Psoas muscle (tissue), 8 donors: ENCODE measurements at regions of chr7 and their contacts with region 1.

Region 1: GRCh38 chr7:158782761-158783401 is 46.4 kb downstream of the ESYT2 start:
- DNase-seq: peak; percentile 57 to 83
- ATAC-seq: peak; percentile 85 to 94 (median 88)
- H3K4me3 ChIP-seq: peak overlapping the region; percentile 24
- H3K27ac ChIP-seq: peak overlapping the region; percentile 71
- H3K4me1 ChIP-seq: peaks cover 25% of the 10 kb centered on the region
- H3K27me3 ChIP-seq: no peaks in the 10 kb centered on the region
- CTCF ChIP-seq: peak; percentile 56

Region 2: DNA sequence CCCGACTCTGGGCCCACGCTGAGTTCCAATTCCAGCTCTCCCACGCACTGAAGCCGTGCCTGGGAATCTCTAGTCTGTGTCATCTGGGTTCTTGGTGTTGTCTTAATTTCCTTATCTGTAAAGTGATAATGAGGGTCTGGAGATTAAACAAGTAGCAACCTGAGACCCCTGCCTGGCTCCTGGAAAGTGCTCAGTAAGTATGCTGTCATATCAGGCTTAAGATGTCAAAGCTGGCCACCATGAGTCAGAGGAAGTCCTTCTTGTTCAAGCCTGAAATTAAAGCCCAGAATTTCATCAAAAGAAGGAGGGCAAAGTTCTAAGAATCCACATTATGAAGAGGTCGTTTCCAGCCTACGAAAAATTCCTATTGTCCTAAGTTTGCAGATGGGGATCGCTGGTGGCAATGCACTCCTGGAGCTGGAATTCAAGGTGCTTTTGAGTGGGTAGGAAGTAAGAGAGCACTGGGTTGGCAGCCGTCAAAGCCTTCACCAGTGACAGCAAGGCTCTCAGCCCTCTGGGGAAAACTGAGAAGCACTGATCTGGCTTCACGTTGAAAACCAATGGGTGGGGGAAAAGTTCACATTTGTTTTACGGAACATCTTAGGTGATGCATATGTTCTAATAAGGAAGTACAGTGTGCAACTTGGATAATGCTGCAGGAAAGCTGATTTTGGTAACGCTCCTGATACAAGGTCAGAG is 28.0 kb before region 1 on chr7:
- intact Hi-C with region 1: no loop called
- DNase-seq: no peak
- ATAC-seq: no peak
- H3K4me3 ChIP-seq: no peak overlapping the region
- H3K27ac ChIP-seq: no peak overlapping the region
- H3K4me1 ChIP-seq: no peaks in the 10 kb centered on the region
- H3K27me3 ChIP-seq: no peaks in the 10 kb centered on the region
- CTCF ChIP-seq: no peak

Region 3: GRCh38 chr7:158818325-158819213 is 35.7 kb after region 1 on chr7:
- intact Hi-C with region 1: loop called in 1 of 2 experiments (anchors 5 kb)
- DNase-seq: peak; percentile 92 to 96
- ATAC-seq: peak; percentile 94 to 97 (median 96)
- H3K4me3 ChIP-seq: peak overlapping the region; percentile 52
- H3K27ac ChIP-seq: peak overlapping the region; percentile 95
- H3K4me1 ChIP-seq: peaks cover 70% of the 10 kb centered on the region
- H3K27me3 ChIP-seq: no peaks in the 10 kb centered on the region
- CTCF ChIP-seq: no peak

Region 4: GRCh38 chr7:158829342-158830210 is 46.7 kb after region 1 on chr7 and contains the start of gene ESYT2:
- intact Hi-C with region 1: loop called in 1 of 2 experiments (anchors 2 kb)
- DNase-seq: peak; percentile 99 to 100
- ATAC-seq: peak; percentile 92 to 96 (median 94)
- H3K4me3 ChIP-seq: peak within 1 kb of the TSS; percentile 85
- H3K27ac ChIP-seq: peak within 1 kb of the TSS; percentile 99
- H3K4me1 ChIP-seq: peaks cover 16% of the 10 kb centered on the region
- H3K27me3 ChIP-seq: no peaks in the 10 kb centered on the region
- CTCF ChIP-seq: peak; percentile 8
- total RNA-seq, gene ESYT2: 35.9 to 63.4 (median 54.1) TPM

Region 5: DNA sequence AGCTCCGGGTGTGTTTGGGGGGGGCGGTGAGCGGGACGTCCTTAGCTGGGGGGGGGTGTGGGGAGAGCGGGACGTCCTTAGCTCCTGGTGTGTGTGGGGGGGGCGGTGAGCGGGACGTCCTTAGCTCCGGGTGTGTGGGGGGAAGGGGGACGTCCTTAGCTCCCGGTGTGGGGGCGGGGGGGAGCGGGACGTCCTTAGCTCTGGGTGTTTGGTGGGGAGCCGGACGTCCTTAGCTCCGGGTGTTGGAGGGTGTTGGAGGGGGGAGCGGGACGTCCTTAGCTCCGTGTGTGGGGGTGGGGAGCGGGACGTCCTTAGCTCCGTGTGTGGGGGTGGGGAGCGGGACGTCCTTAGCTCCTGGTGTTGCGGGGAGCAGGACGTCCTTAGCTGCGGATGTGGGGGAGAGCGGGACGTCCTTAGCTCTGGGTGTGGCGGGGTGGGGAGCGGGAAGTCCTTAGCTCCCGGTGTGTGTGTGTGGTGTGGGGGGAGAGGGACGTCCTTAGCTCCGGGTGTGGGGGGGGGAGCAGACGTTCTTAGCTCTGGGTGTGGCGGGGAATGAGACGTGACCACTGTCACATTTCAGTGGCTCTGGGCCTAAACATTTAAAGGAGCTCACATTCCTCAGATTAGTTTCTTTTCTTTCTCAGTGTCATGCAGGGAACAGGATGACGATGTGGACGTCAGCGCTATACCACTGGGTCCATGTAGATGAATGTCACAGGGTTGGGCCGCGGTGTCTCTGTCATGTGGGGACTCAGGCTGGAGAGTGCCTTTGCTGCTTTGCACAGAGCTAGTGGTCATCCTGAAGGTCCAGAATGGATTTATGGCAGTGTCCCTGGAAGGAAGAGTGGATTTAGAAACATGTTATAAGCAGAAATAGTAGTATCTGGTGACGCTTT is 81.0 kb after region 1 on chr7:
- intact Hi-C with region 1: loop called (anchors 5 to 10 kb)
- DNase-seq: peak; percentile 76 to 91
- ATAC-seq: peak; percentile 80 to 87 (median 84)
- H3K4me3 ChIP-seq: peak overlapping the region; percentile 63
- H3K27ac ChIP-seq: peak overlapping the region; percentile 86
- H3K4me1 ChIP-seq: peaks cover 16% of the 10 kb centered on the region
- H3K27me3 ChIP-seq: no peaks in the 10 kb centered on the region
- CTCF ChIP-seq: no peak

Region 6: DNA sequence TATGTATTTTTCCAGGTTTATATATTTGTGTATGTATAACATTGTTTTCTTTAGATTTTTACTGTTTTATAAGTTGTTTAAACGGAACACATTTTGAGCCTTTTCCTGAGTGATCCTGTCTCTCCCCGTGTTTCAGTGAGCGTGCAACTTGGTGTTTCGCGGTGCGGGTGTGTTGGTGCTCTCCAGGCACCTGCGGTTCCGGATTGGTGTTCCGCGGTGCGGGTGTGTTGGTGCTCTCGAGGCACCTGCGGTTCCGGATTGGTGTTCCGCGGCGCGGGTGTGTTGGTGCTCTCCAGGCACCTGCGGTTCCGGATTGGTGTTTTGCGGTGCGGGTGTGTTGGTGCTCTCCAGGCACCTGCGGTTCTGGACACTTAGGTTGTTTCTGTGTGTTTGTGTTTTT is 94.1 kb after region 1 on chr7:
- intact Hi-C with region 1: no loop called
- DNase-seq: no peak
- ATAC-seq: no peak
- H3K4me3 ChIP-seq: no peak overlapping the region
- H3K27ac ChIP-seq: no peak overlapping the region
- H3K4me1 ChIP-seq: no peaks in the 10 kb centered on the region
- H3K27me3 ChIP-seq: no peaks in the 10 kb centered on the region
- CTCF ChIP-seq: no peak

Region 7: DNA sequence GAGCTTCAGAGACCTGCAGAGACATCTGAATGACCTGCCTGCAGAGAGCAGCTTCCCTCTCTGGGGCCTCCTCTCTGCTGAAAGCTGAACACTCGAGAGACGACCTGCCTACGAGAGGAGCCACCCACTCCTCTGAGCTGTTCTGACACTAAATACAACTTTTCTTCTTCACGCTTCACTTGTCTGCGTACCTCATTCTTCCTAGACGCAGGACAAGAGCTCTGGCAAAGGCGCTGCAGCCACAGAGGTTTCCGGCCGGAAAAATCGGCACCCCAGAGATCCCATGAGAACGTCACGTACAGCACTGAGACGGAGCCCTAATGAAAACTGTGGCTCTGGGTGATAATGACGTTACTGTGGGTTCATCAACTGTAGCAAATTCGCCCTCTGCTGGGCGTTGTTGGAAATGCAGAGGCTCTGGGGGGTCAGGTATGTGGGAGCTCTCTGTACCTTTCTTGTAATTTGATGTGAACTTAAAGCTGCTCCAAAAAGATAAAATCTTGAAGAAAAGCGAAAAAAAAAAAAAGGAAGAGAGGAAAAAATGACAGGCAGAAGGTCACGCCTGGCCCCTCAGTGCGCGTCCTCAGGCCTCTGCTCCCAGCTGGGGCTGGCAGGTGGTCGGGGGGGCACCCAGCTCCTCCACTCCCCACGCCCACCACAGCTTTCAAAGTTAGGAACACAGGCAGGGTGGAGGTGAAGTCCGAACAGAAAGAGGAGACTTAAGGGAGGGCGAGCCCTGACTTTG is 194.1 kb after region 1 on chr7:
- intact Hi-C with region 1: loop called in 1 of 2 experiments (anchors 5 kb)
- DNase-seq: peak; percentile 76 to 80
- ATAC-seq: peak; percentile 36 to 72 (median 58)
- H3K4me3 ChIP-seq: peak overlapping the region; percentile 42
- H3K27ac ChIP-seq: peak overlapping the region; percentile 41
- H3K4me1 ChIP-seq: peaks cover 6% of the 10 kb centered on the region
- H3K27me3 ChIP-seq: no peaks in the 10 kb centered on the region
- CTCF ChIP-seq: peak; percentile 81

Region 8: DNA sequence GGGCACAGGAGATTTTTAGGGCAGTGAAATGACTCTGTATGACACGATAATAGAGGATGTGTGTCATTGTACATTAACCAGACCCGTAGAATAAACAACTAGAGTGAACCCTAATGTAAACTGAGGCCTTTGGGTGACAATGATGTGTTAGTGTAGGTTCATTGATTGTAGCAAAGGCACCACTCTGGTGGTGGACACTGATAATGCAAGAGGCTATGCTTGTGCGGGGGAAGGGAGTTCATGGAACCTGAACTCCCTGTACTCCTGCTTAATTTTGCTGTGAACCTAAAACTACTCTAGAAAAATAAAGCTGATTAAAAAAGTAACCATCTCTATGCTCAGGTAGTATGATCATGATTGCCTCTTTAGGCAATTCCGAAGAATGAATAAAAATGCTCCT is 458.1 kb after region 1 on chr7:
- intact Hi-C with region 1: no loop called
- DNase-seq: no peak
- ATAC-seq: no peak
- H3K4me3 ChIP-seq: no peak overlapping the region
- H3K27ac ChIP-seq: no peak overlapping the region
- H3K4me1 ChIP-seq: no peaks in the 10 kb centered on the region
- H3K27me3 ChIP-seq: no peaks in the 10 kb centered on the region
- CTCF ChIP-seq: no peak